ENCODE measurements at regions of chr10 and their contacts with region 1.

Region 1: GRCh38 chr10:22436884-22437619 is 91.8 kb downstream of the SPAG6 start:
- DNase-seq: peak; percentile 84 to 96 (median 90)
- ATAC-seq: peak; percentile 85
- H3K4me3 ChIP-seq: peak overlapping the region; percentile 92
- H3K4me3 Mint-ChIP-seq: peak overlapping the region; percentile 98
- H3K27ac ChIP-seq: peak overlapping the region; percentile 90 to 94
- H3K27ac Mint-ChIP-seq: peak overlapping the region; percentile 100
- H3K4me1 ChIP-seq: peaks cover 24% of the 10 kb centered on the region
- H3K4me1 Mint-ChIP-seq: peaks cover 43% of the 10 kb centered on the region
- H3K27me3 ChIP-seq: no peaks in the 10 kb centered on the region
- H3K27me3 Mint-ChIP-seq: no peaks in the 10 kb centered on the region
- CTCF ChIP-seq: peak; percentile 11

Region 2: GRCh38 chr10:21675157-21675796 is 761.8 kb before region 1 on chr10:
- CTCF ChIA-PET with region 1: no interaction called
- POLR2A ChIA-PET with region 1: no interaction called
- intact Hi-C with region 1: no loop called
- DNase-seq: peak in 9 of 14 experiments; percentile 4 to 61 (median 15)
- ATAC-seq: peak; percentile 78
- H3K4me3 ChIP-seq: no peak overlapping the region
- H3K4me3 Mint-ChIP-seq: no peak overlapping the region
- H3K27ac ChIP-seq: no peak overlapping the region
- H3K27ac Mint-ChIP-seq: no peak overlapping the region
- H3K4me1 ChIP-seq: no peaks in the 10 kb centered on the region
- H3K4me1 Mint-ChIP-seq: peaks cover 35% of the 10 kb centered on the region
- H3K27me3 ChIP-seq: no peaks in the 10 kb centered on the region
- H3K27me3 Mint-ChIP-seq: no peaks in the 10 kb centered on the region
- CTCF ChIP-seq: peak; percentile 82

Region 3: GRCh38 chr10:22003079-22003913 is 433.8 kb before region 1 on chr10 and contains the start of gene DNAJC1:
- CTCF ChIA-PET with region 1: interaction called, 4 read pairs
- POLR2A ChIA-PET with region 1: interaction called, 31 read pairs
- intact Hi-C with region 1: loop called (anchors 5 kb)
- DNase-seq: peak; percentile 96 to 99 (median 98)
- ATAC-seq: peak; percentile 91
- H3K4me3 ChIP-seq: peak within 1 kb of the TSS; percentile 91
- H3K4me3 Mint-ChIP-seq: peak within 1 kb of the TSS; percentile 95
- H3K27ac ChIP-seq: peak within 1 kb of the TSS; percentile 75 to 79
- H3K27ac Mint-ChIP-seq: peak within 1 kb of the TSS; percentile 84
- H3K4me1 ChIP-seq: peaks cover 12% of the 10 kb centered on the region
- H3K4me1 Mint-ChIP-seq: peaks cover 28% of the 10 kb centered on the region
- H3K27me3 ChIP-seq: no peaks in the 10 kb centered on the region
- H3K27me3 Mint-ChIP-seq: no peaks in the 10 kb centered on the region
- CTCF ChIP-seq: no peak
- total RNA-seq, gene DNAJC1: 16.8 to 19.3 TPM

Region 4: DNA sequence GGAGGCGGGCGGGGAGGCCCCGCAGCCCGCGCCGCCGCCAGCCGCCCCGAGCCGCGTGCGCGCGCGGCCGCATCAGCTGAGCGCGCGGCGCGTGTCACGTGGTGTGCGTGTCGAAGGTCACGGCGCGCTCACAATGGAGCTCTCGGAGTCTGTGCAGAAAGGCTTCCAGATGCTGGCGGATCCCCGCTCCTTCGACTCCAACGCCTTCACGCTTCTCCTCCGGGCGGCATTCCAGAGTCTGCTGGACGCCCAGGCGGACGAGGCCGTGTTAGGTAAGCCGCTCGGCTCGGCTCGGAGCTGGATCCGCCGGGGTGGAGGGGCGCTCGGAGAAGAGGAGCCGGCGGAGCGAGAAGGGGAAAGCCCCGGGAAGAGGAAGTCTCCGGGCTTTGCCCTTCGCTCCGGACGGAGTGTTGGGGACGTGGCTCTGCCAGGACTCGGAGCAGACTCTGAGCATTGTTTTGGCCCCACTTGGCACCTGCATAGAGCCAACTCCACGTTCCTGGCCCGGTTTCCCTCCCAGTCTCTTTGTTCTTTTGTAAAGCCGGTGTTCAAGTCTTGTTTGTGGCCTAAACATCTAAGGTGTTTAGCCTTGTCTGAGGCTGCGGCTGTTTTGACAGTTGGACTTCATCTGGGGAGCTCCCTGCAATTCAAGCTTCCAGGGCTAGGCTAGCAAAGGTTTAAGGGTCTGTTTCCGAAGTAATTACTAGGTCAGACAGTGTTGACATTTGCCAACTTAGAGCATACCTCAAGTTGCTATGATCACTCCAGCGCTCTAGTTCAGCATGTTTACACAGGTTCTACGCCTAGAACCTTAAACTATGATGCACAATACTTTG is 120.5 kb before region 1 on chr10 and contains the start of gene COMMD3:
- CTCF ChIA-PET with region 1: interaction called, 4 read pairs
- POLR2A ChIA-PET with region 1: interaction called, 61 read pairs
- intact Hi-C with region 1: loop called (anchors 2 to 5 kb)
- DNase-seq: peak; percentile 59 to 94 (median 74)
- ATAC-seq: peak; percentile 55
- H3K4me3 ChIP-seq: peak within 1 kb of the TSS; percentile 82
- H3K4me3 Mint-ChIP-seq: peak within 1 kb of the TSS; percentile 95
- H3K27ac ChIP-seq: peak within 1 kb of the TSS; percentile 71 to 74
- H3K27ac Mint-ChIP-seq: peak within 1 kb of the TSS; percentile 90
- H3K4me1 ChIP-seq: peaks cover 17% of the 10 kb centered on the region
- H3K4me1 Mint-ChIP-seq: peaks cover 42% of the 10 kb centered on the region
- H3K27me3 ChIP-seq: peaks cover 0 to 5% of the 10 kb centered on the region in 2 experiments
- H3K27me3 Mint-ChIP-seq: peaks cover 26% of the 10 kb centered on the region
- CTCF ChIP-seq: no peak
- total RNA-seq, gene COMMD3: 43.2 to 51.0 TPM

Region 5: GRCh38 chr10:22447068-22447467 is 10.0 kb after region 1 on chr10:
- CTCF ChIA-PET with region 1: no interaction called
- POLR2A ChIA-PET with region 1: interaction called, 16 read pairs
- intact Hi-C with region 1: no loop called
- DNase-seq: no peak
- ATAC-seq: no peak
- H3K4me3 ChIP-seq: no peak overlapping the region
- H3K4me3 Mint-ChIP-seq: no peak overlapping the region
- H3K27ac ChIP-seq: no peak overlapping the region
- H3K27ac Mint-ChIP-seq: no peak overlapping the region
- H3K4me1 ChIP-seq: no peaks in the 10 kb centered on the region
- H3K4me1 Mint-ChIP-seq: no peaks in the 10 kb centered on the region
- H3K27me3 ChIP-seq: peaks cover 0 to 4% of the 10 kb centered on the region in 2 experiments
- H3K27me3 Mint-ChIP-seq: peaks cover 41% of the 10 kb centered on the region
- CTCF ChIP-seq: no peak

Region 6: DNA sequence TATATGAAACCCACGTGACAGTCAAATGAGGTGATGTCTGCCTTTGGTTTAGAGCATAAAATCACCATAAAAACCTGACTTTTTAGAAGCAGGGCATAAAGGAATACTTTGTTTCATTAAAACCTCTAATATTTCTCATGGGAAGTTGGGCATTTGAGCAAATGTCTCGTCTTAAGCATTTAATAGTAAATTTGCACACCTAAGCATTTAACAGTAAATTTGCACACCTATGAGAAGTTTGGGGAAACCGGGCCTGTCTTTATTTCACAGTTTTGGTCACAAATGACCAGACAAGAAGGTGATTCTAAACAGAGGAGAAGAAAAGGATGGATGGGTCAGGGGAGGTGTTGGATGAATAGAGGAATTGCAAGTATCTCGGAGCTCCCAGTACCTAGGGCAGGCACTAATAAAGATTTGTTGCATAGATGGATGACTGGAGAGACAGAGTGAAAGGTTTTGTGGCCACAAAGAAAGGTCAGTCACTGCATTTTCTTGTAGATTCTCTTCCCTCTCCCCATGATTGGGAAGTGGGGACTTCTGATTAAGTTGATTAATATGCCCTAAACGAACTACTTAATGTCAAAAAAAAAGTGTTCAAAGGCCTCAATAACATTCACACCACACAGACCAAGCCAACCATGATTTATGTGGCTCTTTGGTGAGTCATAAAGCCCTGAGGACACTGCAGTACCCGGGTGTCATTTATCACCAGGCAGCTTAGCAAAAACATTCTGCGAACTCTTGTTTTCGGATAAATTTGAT is 66.4 kb after region 1 on chr10:
- CTCF ChIA-PET with region 1: no interaction called
- POLR2A ChIA-PET with region 1: no interaction called
- intact Hi-C with region 1: no loop called
- DNase-seq: peak in 1 of 14 experiments; percentile 20
- ATAC-seq: no peak
- H3K4me3 ChIP-seq: no peak overlapping the region
- H3K4me3 Mint-ChIP-seq: no peak overlapping the region
- H3K27ac ChIP-seq: no peak overlapping the region
- H3K27ac Mint-ChIP-seq: no peak overlapping the region
- H3K4me1 ChIP-seq: peaks cover 14% of the 10 kb centered on the region
- H3K4me1 Mint-ChIP-seq: peaks cover 16% of the 10 kb centered on the region
- H3K27me3 ChIP-seq: no peaks in the 10 kb centered on the region
- H3K27me3 Mint-ChIP-seq: peaks cover 15% of the 10 kb centered on the region
- CTCF ChIP-seq: no peak

Region 7: GRCh38 chr10:22655311-22655981 is 218.4 kb after region 1 on chr10:
- CTCF ChIA-PET with region 1: no interaction called
- POLR2A ChIA-PET with region 1: interaction called, 10 read pairs
- intact Hi-C with region 1: no loop called
- DNase-seq: peak in 12 of 14 experiments; percentile 17 to 81 (median 51)
- ATAC-seq: peak; percentile 74
- H3K4me3 ChIP-seq: peak overlapping the region; percentile 27
- H3K4me3 Mint-ChIP-seq: peak overlapping the region; percentile 82
- H3K27ac ChIP-seq: peak overlapping the region; percentile 58 to 67
- H3K27ac Mint-ChIP-seq: peak overlapping the region; percentile 91
- H3K4me1 ChIP-seq: peaks cover 92% of the 10 kb centered on the region
- H3K4me1 Mint-ChIP-seq: peaks cover 96% of the 10 kb centered on the region
- H3K27me3 ChIP-seq: no peaks in the 10 kb centered on the region
- H3K27me3 Mint-ChIP-seq: no peaks in the 10 kb centered on the region
- CTCF ChIP-seq: no peak